ENCODE measurements at regions of chr1 and their contacts with region 1.

Region 1: DNA sequence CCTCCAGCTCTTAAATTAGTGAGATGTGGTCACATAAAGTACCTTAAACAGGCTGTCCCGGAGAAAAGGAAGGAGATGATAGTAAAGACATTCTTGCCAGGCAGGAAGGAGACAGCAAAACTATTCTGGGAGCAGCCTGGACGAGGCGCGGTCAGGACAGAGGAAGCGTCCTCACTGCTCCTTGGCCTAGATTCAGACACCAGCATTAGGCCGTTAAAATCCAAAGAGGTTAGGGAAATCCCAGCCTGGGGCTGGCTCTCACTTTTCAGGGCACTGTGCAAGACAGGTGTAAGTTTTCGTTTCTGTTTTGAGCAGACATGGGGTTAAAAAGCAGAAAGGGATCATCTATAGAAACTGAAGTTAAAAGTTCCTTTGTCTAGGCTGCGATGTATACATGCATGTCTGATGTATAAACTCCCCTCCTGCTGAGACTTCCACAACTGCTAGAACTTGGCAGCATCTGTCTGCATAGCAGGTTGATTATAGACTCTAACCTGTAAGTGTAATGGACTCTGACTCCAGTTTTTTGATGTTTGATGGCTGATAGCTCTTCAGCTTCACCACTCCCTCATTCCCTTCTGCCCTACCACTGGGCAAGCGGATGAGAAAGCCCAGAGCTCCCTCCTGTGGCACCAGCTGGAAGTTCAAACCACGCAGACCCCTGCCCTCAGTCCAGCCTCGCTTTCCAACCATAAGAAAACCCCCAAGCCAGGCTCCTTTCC is 21.5 kb downstream of the STPG1 start:
- DNase-seq: no peak

Region 2: DNA sequence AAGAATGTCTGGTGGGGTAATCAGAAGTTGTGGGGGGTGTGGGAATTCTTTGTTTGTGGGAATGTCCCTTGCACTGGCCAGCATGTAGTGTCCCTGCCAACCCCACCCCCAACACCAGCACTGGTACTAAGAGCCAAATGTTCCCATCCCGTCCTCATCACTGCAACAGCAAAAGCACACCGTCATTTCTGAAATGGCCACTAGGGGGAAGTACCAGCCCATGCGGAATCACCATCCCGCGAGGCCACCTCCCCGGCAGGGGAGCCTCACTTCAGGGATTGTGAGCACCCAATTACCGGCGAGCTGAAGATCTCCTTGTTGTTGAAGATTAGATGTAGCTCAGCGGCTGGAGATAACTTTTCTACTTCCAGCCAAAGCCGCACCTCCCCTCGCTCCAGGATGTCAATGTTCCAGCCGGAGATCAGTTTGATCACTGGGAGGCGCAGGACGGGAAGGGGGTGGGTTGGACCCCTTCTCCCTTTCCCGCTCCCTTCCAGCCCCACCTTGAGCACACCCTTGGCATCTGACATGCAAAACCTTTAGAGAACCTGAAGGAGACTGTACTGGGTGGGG is 321.1 kb before region 1 on chr1:
- intact Hi-C with region 1: loop called (anchors 10 kb)
- DNase-seq: peak; percentile 83

Region 3: GRCh38 chr1:24150234-24151174 is 241.5 kb before region 1 on chr1:
- intact Hi-C with region 1: loop called (anchors 5 kb)
- DNase-seq: peak; percentile 95

Region 4: GRCh38 chr1:24201941-24202440 is 190.1 kb before region 1 on chr1:
- intact Hi-C with region 1: loop called (anchors 1 kb)
- DNase-seq: peak; percentile 83

Region 5: GRCh38 chr1:24289937-24290595 is 102.0 kb before region 1 on chr1:
- intact Hi-C with region 1: loop called (anchors 5 kb)
- DNase-seq: peak; percentile 88

Measured in cardiac septum (tissue), 1 donor.